Motor neuron (in vitro differentiated cells): ENCODE measurements at regions of chr15 and their contacts with region 1.

Region 1: DNA sequence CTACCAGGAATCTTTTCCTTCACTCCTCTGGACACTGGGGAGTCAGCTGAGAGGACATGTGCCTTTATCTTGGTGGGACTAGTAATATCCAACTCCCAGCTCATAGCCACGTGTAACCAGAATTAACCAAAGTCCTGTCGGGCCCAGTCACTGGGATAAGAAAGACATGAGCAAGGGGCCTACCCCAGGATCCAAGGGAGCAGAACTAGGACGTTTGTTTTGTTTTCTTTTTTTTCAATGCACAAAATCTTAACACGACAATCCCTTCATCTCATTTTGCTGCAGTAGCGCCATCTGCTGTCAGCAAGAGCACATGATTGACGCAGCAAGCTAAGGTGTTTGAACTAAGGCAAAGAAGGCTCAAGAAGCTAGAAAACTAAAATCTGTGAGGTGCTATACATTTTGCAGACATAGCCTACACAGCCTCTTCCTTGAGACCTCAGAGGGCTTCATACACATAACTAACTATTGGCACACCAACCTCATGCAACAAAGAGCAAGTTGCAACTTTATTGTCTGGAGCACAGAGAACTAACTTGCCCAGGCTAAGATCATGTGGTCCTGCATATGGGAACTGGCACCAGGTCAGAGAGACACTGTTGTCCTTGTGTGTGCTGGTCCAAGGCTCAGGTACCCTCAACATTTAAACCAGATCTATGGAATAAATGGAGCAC is 43.6 kb downstream of the RLBP1 start:
- ATAC-seq: peak; percentile 38 to 91 (median 72)
- H3K4me3 ChIP-seq: no peak overlapping the region
- H3K27ac ChIP-seq: no peak overlapping the region
- H3K4me1 ChIP-seq: peaks cover 7 to 9% of the 10 kb centered on the region in 2 donors

Region 2: GRCh38 chr15:88904624-88905327 is 273.0 kb before region 1 on chr15:
- in situ Hi-C with region 1: loop called in 3 of 9 experiments (anchors 25 kb)
- ATAC-seq: peak; percentile 64 to 95 (median 84)
- H3K4me3 ChIP-seq: no peak overlapping the region
- H3K27ac ChIP-seq: no peak overlapping the region
- H3K4me1 ChIP-seq: peaks cover 7 to 17% of the 10 kb centered on the region in 2 donors

Region 3: DNA sequence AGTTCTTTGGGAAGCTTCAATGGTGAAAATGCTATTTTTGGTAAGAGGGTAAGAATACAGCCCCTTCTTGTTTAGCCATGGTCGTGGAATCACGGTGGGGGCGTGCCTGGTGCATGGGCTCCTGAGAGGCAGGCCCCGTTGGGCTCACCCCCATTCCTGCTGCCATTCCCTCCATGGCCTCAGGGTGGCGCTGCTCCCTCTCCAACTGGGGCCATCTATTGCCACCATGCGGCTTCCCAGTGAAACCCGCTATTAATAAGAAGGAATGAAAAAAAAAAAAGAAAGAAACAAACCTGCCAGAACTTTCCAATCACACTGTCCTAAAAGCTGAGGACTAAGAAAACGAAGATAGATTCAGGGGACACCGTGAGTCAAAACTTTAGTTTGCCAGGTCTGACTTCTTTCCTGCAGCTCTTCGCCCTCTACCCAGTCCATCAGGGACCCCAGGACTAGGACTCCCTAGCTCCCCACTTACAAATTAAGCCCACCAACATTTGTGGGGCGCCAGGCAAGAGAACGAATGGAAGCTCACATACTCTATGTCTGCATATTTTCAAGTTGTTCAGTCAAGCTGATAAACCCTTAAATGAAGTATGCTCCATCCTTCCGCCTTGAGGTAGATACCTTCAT is 120.2 kb before region 1 on chr15:
- in situ Hi-C with region 1: loop called in 4 of 9 experiments (anchors 10 to 25 kb)
- ATAC-seq: peak; percentile 64 to 100 (median 86)
- H3K4me3 ChIP-seq: no peak overlapping the region
- H3K27ac ChIP-seq: no peak overlapping the region
- H3K4me1 ChIP-seq: no peaks in the 10 kb centered on the region

Region 4: GRCh38 chr15:89129123-89129815 is 48.5 kb before region 1 on chr15:
- in situ Hi-C with region 1: loop called in 1 of 9 experiments (anchors 10 kb)
- ATAC-seq: peak in 4 of 8 experiments; percentile 33 to 62 (median 44)
- H3K4me3 ChIP-seq: no peak overlapping the region
- H3K27ac ChIP-seq: no peak overlapping the region
- H3K4me1 ChIP-seq: no peaks in the 10 kb centered on the region

Region 5: GRCh38 chr15:89647191-89647851 is 469.6 kb after region 1 on chr15:
- in situ Hi-C with region 1: no loop called
- ATAC-seq: peak; percentile 71 to 97 (median 88)
- H3K4me3 ChIP-seq: no peak overlapping the region
- H3K27ac ChIP-seq: no peak overlapping the region
- H3K4me1 ChIP-seq: no peaks in the 10 kb centered on the region